Tibial artery (tissue), 4 donors: ENCODE measurements at regions of chr9 and their contacts with region 1.

Region 1: GRCh38 chr9:119289740-119290433 is 79.3 kb downstream of the BRINP1 start:
- DNase-seq: peak; percentile 67 to 70
- H3K4me3 ChIP-seq: no peak overlapping the region
- H3K27ac ChIP-seq: no peak overlapping the region
- H3K4me1 ChIP-seq: no peaks in the 10 kb centered on the region
- H3K27me3 ChIP-seq: no peaks in the 10 kb centered on the region
- CTCF ChIP-seq: peak; percentile 83 to 86

Region 2: GRCh38 chr9:118829334-118829733 is 460.6 kb before region 1 on chr9:
- intact Hi-C with region 1: loop called (anchors 5 kb)
- DNase-seq: no peak
- H3K4me3 ChIP-seq: no peak overlapping the region
- H3K27ac ChIP-seq: no peak overlapping the region
- H3K4me1 ChIP-seq: no peaks in the 10 kb centered on the region
- H3K27me3 ChIP-seq: no peaks in the 10 kb centered on the region
- CTCF ChIP-seq: peak; percentile 47 to 57

Region 3: DNA sequence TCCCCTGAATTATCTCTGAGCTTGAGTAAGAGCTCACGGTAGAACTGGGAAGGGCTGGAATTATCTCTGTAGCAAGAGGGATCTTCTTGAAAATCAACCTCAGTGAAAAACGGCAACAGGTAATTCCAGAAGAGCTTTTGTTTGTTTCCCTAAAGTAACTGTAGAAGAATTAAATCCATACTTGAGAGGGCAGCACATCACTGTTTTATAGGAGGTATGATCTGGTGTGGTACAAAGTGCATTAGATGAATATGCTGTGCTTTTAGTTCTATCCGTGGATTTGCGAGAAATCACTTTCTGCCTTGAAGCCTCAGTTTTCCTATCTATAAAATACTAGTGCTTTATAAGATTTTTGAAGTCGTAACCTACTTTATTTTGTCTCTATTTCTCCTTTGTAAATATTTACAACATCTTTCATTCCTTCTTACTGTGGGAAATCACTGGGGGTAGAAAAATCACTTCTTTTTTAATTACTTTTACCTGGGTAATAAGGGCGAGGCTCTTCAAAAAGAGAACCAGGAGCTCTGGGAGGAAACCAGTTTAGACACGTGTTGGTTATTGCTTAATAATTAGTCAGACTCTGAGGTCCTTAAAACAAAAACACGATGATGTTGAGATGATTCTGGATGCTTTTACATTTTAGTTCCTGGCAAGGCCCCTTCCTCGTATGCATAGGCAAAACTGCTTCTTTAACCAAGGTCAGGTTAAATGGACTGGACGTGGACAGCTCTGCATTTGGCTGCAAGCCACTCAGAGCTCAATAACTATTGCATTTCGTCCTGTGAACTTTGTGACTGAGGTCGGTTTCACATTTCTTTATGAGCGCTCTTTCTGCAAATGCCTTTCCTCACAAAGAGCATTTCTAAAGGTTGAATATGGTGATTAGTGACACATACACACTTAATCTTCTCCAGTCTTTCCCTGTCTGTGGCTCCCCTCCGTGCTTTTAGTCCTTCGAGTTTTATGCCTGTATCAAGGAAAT is 296.8 kb before region 1 on chr9:
- intact Hi-C with region 1: loop called (anchors 10 kb)
- DNase-seq: no peak
- H3K4me3 ChIP-seq: no peak overlapping the region
- H3K27ac ChIP-seq: no peak overlapping the region
- H3K4me1 ChIP-seq: peaks cover 0 to 21% (median 0%) of the 10 kb centered on the region in 4 donors
- H3K27me3 ChIP-seq: no peaks in the 10 kb centered on the region
- CTCF ChIP-seq: no peak